Heart left ventricle (tissue), 16 donors: ENCODE measurements at regions of chr1 and their contacts with region 1.

Region 1: GRCh38 chr1:21508580-21509350 is 458 bp upstream of the ALPL start:
- DNase-seq: peak; percentile 68 to 85 (median 77)
- ATAC-seq: peak; percentile 59 to 89 (median 84)
- H3K4me3 ChIP-seq: peak overlapping the region in 11 of 12 donors; percentile 30 to 60 (median 51)
- H3K27ac ChIP-seq: peak overlapping the region in 5 of 12 donors; percentile 9 to 62 (median 42)
- H3K4me1 ChIP-seq: peaks cover 0 to 39% (median 19%) of the 10 kb centered on the region in 12 donors
- H3K27me3 ChIP-seq: peaks cover 0 to 36% (median 7%) of the 10 kb centered on the region in 9 donors
- CTCF ChIP-seq: peak; percentile 32 to 79 (median 62)
- POLR2A ChIP-seq: no peak

Region 2: GRCh38 chr1:21534674-21535378 is 26.1 kb after region 1 on chr1:
- intact Hi-C with region 1: loop called in 1 of 10 experiments (anchors 1 kb)
- DNase-seq: peak in 3 of 5 donors; percentile 27 to 43 (median 41)
- ATAC-seq: peak in 1 of 4 donors; percentile 14
- H3K4me3 ChIP-seq: no peak overlapping the region
- H3K27ac ChIP-seq: peak overlapping the region in 1 of 12 donors; percentile 44
- H3K4me1 ChIP-seq: peaks cover 2 to 46% (median 29%) of the 10 kb centered on the region in 12 donors
- H3K27me3 ChIP-seq: peaks cover 0 to 6% (median 0%) of the 10 kb centered on the region in 9 donors
- CTCF ChIP-seq: peak in 11 of 12 donors; percentile 14 to 56 (median 43)
- POLR2A ChIP-seq: no peak

Region 3: GRCh38 chr1:21573971-21574465 is 65.3 kb after region 1 on chr1:
- intact Hi-C with region 1: loop called (anchors 1 to 5 kb)
- DNase-seq: peak; percentile 85 to 92 (median 90)
- ATAC-seq: peak; percentile 89 to 94 (median 92)
- H3K4me3 ChIP-seq: peak overlapping the region in 2 of 12 donors; percentile 3 to 11
- H3K27ac ChIP-seq: peak overlapping the region; percentile 68 to 96 (median 82)
- H3K4me1 ChIP-seq: peaks cover 0 to 27% (median 21%) of the 10 kb centered on the region in 12 donors
- H3K27me3 ChIP-seq: peaks cover 0 to 4% (median 0%) of the 10 kb centered on the region in 9 donors
- CTCF ChIP-seq: peak; percentile 46 to 81 (median 66)
- POLR2A ChIP-seq: no peak

Region 4: DNA sequence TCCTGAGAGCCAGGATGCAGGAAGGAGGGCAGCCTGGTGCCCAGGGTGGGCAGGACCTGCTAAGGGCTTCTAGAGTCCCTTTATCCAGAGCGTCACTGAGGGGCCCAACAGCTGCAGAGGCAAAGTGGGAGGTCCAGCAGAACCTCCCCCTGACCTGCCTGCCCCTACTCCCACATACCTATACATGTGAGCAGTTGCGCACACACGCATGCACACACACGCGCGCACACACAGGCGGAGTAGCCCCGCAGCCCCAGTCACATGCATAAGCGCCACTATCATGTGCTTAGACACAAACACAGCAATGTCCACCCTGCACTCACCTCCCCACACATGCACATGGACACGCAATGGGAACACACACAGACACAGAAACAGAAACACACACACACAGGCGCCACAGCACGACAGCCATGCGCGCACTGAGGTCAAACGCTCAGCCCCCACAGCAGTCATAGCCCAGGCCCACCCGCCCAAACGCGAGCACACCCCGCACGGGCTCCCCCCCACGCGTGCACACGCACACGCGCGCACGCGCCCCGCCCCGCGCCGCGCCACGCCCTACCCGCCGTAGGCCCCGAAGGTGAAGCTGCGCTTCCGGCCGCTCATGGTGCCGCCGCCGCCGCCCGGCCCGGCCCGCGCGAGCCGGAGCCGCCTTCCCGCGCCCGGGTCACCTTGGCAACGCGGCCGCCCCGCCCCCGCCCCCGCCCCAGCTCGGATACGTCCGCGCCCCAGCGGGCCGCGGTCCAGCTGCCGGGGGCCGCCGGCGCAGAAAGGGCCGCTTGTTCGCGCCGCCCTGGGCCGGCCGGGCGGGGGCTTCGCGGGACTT is 142.7 kb after region 1 on chr1:
- intact Hi-C with region 1: loop called in 5 of 10 experiments (anchors 2 to 10 kb)
- DNase-seq: peak in 2 of 5 donors; percentile 39 to 60
- ATAC-seq: peak in 2 of 4 donors; percentile 57
- H3K4me3 ChIP-seq: peak overlapping the region in 11 of 12 donors; percentile 16 to 58 (median 51)
- H3K27ac ChIP-seq: no peak overlapping the region
- H3K4me1 ChIP-seq: peaks cover 0 to 15% (median 7%) of the 10 kb centered on the region in 12 donors
- H3K27me3 ChIP-seq: peaks cover 0 to 22% (median 2%) of the 10 kb centered on the region in 9 donors
- CTCF ChIP-seq: no peak
- POLR2A ChIP-seq: no peak

Region 5: GRCh38 chr1:21670059-21670881 is 161.5 kb after region 1 on chr1:
- intact Hi-C with region 1: no loop called
- DNase-seq: peak in 1 of 5 donors; percentile 7
- ATAC-seq: no peak
- H3K4me3 ChIP-seq: peak overlapping the region in 3 of 12 donors; percentile 35 to 48 (median 47)
- H3K27ac ChIP-seq: no peak overlapping the region
- H3K4me1 ChIP-seq: peaks cover 6 to 78% (median 43%) of the 10 kb centered on the region in 12 donors
- H3K27me3 ChIP-seq: peaks cover 0 to 42% (median 22%) of the 10 kb centered on the region in 9 donors
- CTCF ChIP-seq: no peak
- POLR2A ChIP-seq: no peak